A673 (cell line): ENCODE measurements at regions of chr18 and their contacts with region 1.

Region 1: GRCh38 chr18:35231052-35231451 is 9.8 kb upstream of the ZNF397 start:
- DNase-seq: peak; percentile 85
- H3K4me3 ChIP-seq: peak overlapping the region; percentile 30
- H3K27ac ChIP-seq: no peak overlapping the region
- H3K4me1 ChIP-seq: no peaks in the 10 kb centered on the region
- H3K27me3 ChIP-seq: no peaks in the 10 kb centered on the region
- CTCF ChIP-seq: peak; percentile 90

Region 2: DNA sequence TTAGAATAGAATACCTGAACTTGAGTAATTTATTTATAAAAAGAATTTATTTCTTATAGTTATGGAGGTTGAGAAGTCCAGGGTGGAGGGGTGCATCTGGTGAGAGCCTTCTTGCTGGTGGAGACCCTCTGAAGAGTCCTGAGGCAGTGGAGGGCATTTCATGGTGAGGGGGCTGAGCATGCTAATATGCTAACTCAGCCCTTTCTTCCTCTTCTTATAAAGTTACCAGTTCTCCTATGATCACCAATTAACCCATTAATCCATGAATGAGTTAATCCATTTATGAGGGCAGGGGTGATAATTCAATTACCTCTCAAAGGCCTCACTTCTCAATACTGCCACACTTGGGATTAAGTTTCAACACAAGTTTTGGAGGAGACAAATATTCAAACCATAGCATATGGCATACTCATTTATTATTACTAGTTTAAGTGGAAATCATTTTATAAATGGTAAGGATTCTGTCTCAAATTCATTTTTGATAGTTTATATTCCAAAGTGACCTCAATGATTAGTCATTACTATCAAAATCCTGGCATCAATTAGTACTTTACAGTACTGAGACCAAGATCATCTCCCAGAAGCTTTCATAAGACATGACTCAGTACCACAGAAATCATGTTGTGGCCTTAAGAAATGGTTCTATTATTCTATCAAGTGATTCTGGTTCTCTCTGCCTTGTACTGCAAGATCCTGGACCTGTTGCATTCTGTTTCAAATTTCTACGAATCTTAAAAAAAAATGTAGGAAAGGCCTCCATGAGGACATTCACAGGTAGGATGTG is 140.6 kb after region 1 on chr18:
- CTCF ChIA-PET with region 1: no interaction called
- POLR2A ChIA-PET with region 1: no interaction called
- intact Hi-C with region 1: no loop called
- DNase-seq: no peak
- H3K4me3 ChIP-seq: no peak overlapping the region
- H3K27ac ChIP-seq: no peak overlapping the region
- H3K4me1 ChIP-seq: no peaks in the 10 kb centered on the region
- H3K27me3 ChIP-seq: no peaks in the 10 kb centered on the region
- CTCF ChIP-seq: no peak

Region 3: DNA sequence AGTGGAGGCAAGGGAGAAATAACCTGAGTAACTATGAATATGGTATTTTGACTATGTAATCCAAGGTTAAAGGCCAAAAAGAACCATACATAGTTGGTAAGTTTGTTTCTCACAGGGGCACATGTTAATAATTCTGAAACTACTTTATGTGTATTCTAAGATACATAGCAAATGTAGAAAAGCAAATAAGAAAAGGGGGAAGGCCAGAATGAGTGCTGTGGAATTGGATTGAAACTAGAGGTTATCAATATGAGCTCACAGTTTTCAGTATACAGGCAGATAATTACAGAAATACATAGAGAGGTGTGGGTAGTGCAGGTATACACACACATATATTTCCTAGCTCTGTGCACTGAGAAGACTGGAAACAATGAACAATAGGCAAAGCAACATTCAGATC is 253.0 kb after region 1 on chr18:
- CTCF ChIA-PET with region 1: no interaction called
- POLR2A ChIA-PET with region 1: no interaction called
- intact Hi-C with region 1: loop called (anchors 10 kb)
- DNase-seq: no peak
- H3K4me3 ChIP-seq: no peak overlapping the region
- H3K27ac ChIP-seq: no peak overlapping the region
- H3K4me1 ChIP-seq: peaks cover 4% of the 10 kb centered on the region
- H3K27me3 ChIP-seq: no peaks in the 10 kb centered on the region
- CTCF ChIP-seq: no peak